Activated CD8-positive, alpha-beta T cell treated with anti-CD3 and anti-CD28 coated beads for 36 hours (primary cell): ENCODE measurements at regions of chr1 and their contacts with region 1.

Region 1: DNA sequence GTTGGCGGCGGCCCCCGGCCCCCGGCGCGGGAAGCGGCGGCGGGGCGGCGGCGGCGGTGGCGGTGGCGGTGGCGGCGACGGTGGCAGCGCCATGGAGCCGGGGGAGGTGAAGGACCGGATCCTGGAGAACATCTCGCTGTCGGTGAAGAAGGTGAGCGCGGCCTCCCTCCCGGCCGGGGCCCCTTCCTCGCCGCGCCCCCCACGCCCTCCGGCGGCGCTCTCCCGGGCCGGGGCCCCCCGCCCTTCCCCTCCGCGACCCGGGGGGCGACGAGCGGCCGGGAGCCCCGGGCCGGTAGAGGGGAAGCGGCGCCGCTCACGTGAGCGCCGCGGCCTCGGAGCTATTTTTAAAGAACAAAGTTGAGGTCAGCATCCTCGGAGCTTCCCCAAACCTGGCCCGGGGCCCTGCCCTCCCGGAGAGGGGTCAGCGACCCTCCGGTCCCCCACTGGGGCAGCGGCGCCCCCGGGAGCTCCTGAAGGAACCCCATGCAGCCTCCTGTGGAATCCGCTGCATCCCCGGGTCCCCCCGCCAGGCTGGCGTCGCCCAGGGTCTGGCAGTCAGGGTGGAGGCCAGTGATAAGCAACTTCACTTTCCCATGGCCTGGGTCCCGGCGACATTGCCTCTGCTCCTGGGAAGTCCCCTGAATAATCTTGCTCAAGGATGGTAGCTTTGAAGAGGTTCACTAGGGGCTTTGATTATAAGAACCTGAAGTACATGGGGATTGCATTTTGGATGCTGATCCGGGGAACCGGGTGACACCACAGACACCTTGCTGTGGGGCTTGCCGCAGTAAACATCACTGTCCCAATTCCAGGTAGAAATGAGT is 560 bp downstream of the PLEKHM2 start:
- DNase-seq: peak; percentile 51
- ATAC-seq: peak; percentile 53
- H3K4me3 Mint-ChIP-seq: peak overlapping the region; percentile 88
- H3K27ac Mint-ChIP-seq: peak overlapping the region; percentile 85
- H3K4me1 Mint-ChIP-seq: peaks cover 43% of the 10 kb centered on the region
- H3K27me3 Mint-ChIP-seq: no peaks in the 10 kb centered on the region
- CTCF ChIP-seq: peak; percentile 20

Region 2: DNA sequence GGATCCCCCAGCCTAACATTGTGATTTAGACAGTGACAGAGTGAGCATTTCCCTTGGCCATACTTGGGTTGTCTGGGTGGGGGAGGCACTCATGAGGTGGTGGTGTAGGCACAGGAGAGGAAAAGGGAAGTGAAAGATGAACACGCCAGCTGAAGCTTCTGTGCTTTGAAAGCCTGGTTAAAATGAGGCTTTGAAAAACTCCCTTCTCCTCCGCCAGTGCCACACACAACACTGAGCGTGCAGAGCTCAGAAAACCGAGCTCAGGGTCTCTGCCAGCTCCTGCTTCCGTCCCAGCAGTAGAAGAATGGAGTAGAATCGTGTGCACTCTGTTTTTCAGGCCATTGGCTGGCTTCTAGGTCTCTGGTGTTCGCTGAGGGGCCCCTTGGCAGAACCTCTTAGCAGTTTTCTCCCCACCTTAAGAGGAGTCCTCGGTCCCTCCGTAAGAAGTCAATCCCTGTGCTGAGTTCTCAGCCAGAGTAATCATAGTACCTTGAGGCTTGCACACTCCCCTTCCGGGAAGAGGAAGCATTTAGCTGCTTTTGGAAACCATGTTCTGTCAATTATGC is 12.4 kb after region 1 on chr1:
- CTCF ChIA-PET with region 1: interaction called, 6 read pairs
- POLR2A ChIA-PET with region 1: interaction called, 21 read pairs
- intact Hi-C with region 1: no loop called
- DNase-seq: peak; percentile 68
- ATAC-seq: peak; percentile 89
- H3K4me3 Mint-ChIP-seq: peak overlapping the region; percentile 74
- H3K27ac Mint-ChIP-seq: peak overlapping the region; percentile 94
- H3K4me1 Mint-ChIP-seq: peaks cover 39% of the 10 kb centered on the region
- H3K27me3 Mint-ChIP-seq: no peaks in the 10 kb centered on the region
- CTCF ChIP-seq: no peak